ENCODE measurements at regions of chr5 and their contacts with region 1.

Region 1: GRCh38 chr5:38922199-38922598 is 76.4 kb downstream of the OSMR start:
- DNase-seq: peak; percentile 75
- ATAC-seq: peak; percentile 72
- H3K4me3 Mint-ChIP-seq: no peak overlapping the region
- H3K27ac Mint-ChIP-seq: no peak overlapping the region
- H3K4me1 Mint-ChIP-seq: no peaks in the 10 kb centered on the region
- H3K27me3 Mint-ChIP-seq: peaks cover 14% of the 10 kb centered on the region

Region 2: GRCh38 chr5:38831909-38832308 is 90.3 kb before region 1 on chr5:
- CTCF ChIA-PET with region 1: interaction called, 7 read pairs
- POLR2A ChIA-PET with region 1: no interaction called
- intact Hi-C with region 1: loop called (anchors 1 to 5 kb)
- DNase-seq: peak; percentile 29
- ATAC-seq: no peak
- H3K4me3 Mint-ChIP-seq: no peak overlapping the region
- H3K27ac Mint-ChIP-seq: no peak overlapping the region
- H3K4me1 Mint-ChIP-seq: no peaks in the 10 kb centered on the region
- H3K27me3 Mint-ChIP-seq: peaks cover 17% of the 10 kb centered on the region

Region 3: GRCh38 chr5:38845526-38846378 is 76.4 kb before region 1 on chr5 and contains the start of gene OSMR:
- CTCF ChIA-PET with region 1: no interaction called
- POLR2A ChIA-PET with region 1: no interaction called
- intact Hi-C with region 1: loop called in 1 of 2 experiments (anchors 5 kb)
- DNase-seq: peak; percentile 72
- ATAC-seq: peak; percentile 74
- H3K4me3 Mint-ChIP-seq: peak within 1 kb of the TSS; percentile 70
- H3K27ac Mint-ChIP-seq: peak within 1 kb of the TSS; percentile 61
- H3K4me1 Mint-ChIP-seq: peaks cover 8% of the 10 kb centered on the region
- H3K27me3 Mint-ChIP-seq: peaks cover 48% of the 10 kb centered on the region
- total RNA-seq, gene OSMR: 0.25 to 0.26 TPM

Measured in activated CD4-positive, alpha-beta T cell treated with anti-CD3 and anti-CD28 coated beads for 36 hours (primary cell).